ENCODE measurements at regions of chr1 and their contacts with region 1.

Region 1: GRCh38 chr1:229227298-229227919 is 43.5 kb upstream of the RAB4A start:
- DNase-seq: peak; percentile 77 to 87
- H3K4me3 ChIP-seq: no peak overlapping the region
- H3K4me3 Mint-ChIP-seq: peak overlapping the region; percentile 11
- H3K27ac Mint-ChIP-seq: no peak overlapping the region
- H3K4me1 ChIP-seq: peaks cover 65% of the 10 kb centered on the region
- H3K4me1 Mint-ChIP-seq: peaks cover 40% of the 10 kb centered on the region
- H3K27me3 ChIP-seq: no peaks in the 10 kb centered on the region
- H3K27me3 Mint-ChIP-seq: no peaks in the 10 kb centered on the region
- CTCF ChIP-seq: peak; percentile 80 to 91

Region 2: DNA sequence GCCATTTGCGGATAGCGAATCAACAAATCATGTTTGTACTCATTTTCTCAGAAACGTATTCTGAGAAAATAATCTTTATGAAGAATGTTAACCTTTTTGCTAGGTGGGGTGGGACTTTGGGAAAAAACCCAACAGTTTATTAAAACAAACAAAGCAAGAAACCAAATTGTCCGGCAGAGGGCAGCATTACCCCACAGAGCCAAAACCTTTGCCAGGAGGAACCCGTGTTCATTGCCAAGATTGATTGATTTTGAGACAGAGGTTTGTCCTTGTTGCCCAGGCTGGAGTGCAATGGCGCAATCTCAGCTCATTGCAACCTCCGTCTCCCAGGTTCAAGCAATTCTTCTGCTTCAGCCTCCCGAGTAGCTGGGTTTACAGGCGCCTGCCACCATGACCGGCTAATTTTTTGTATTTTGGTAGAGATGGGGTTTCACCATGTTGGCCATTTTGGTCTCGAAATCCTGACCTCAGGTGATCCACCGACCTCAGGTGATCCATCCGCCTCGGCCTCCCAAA is 563.0 kb before region 1 on chr1:
- CTCF ChIA-PET with region 1: no interaction called
- POLR2A ChIA-PET with region 1: interaction called, 3 read pairs
- intact Hi-C with region 1: loop called (anchors 1 kb)
- DNase-seq: peak; percentile 72 to 80
- H3K4me3 ChIP-seq: no peak overlapping the region
- H3K4me3 Mint-ChIP-seq: no peak overlapping the region
- H3K27ac Mint-ChIP-seq: no peak overlapping the region
- H3K4me1 ChIP-seq: peaks cover 8% of the 10 kb centered on the region
- H3K4me1 Mint-ChIP-seq: peaks cover 5% of the 10 kb centered on the region
- H3K27me3 ChIP-seq: no peaks in the 10 kb centered on the region
- H3K27me3 Mint-ChIP-seq: no peaks in the 10 kb centered on the region
- CTCF ChIP-seq: peak; percentile 65 to 90

Region 3: DNA sequence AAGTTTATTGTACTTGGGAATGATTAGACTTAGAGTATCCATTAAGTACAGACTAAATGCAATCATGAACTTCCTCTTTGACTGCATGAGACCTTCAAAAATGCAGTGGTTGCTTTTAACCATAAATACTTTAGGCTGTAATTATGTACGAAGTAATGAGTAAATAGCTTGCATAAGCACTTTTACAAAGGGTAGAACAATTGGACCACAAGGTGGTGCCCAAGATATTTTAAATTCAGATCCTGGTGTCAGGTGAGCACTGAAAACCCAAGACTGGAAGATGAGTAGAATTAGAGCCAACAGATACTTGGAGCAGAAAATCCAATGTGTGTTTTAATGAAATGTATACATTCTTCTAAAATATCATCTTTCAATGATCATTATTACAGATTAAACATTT is 535.5 kb before region 1 on chr1:
- CTCF ChIA-PET with region 1: interaction called, 3 read pairs
- POLR2A ChIA-PET with region 1: no interaction called
- intact Hi-C with region 1: loop called (anchors 1 kb)
- DNase-seq: peak in 1 of 2 experiments; percentile 63
- H3K4me3 ChIP-seq: no peak overlapping the region
- H3K4me3 Mint-ChIP-seq: no peak overlapping the region
- H3K27ac Mint-ChIP-seq: no peak overlapping the region
- H3K4me1 ChIP-seq: no peaks in the 10 kb centered on the region
- H3K4me1 Mint-ChIP-seq: no peaks in the 10 kb centered on the region
- H3K27me3 ChIP-seq: no peaks in the 10 kb centered on the region
- H3K27me3 Mint-ChIP-seq: no peaks in the 10 kb centered on the region
- CTCF ChIP-seq: peak; percentile 37 to 72

Region 4: DNA sequence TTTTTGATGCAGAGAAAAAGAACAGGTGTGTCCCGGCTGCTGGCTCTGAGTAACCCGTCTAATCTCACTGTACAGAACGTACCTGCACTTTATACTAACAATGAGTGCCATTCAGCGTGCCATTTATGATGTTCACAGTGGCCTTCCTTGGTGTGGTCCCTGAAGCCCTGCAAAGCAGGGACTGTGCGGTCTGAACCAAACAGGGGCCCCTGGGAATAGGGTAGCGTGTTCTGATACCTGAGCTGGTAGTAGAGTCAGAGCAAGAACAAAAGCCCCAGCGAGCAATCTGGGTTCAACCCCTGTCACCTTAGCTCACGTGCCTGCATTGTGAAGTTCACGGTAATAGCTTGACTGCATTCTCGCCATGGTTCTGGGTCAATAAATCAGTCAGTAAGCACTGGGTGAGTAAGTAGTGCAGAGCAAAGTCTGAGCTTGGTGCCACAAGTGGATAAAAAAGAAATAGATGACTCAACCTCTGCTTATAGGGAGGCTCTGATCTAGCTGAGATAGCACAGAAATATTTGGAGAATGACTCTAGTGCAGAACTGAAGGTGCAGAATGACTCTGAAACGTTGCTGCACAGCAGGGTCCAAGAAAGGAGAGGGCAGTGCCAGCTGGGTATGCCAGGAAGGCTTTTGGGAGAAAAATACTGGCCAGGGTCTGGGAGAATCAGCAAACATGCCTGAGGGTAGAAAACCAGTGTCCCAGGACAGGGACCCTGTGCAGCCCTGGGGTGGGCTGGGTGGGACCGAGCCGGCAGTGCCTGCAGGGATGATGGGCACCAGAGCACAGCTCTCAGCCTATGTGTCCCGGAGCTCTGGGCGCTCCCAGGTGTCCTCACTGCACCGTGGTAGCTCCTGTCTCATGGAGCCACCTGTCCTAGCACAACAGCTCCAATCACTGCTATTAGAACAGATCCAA is 366.2 kb before region 1 on chr1:
- CTCF ChIA-PET with region 1: no interaction called
- POLR2A ChIA-PET with region 1: no interaction called
- intact Hi-C with region 1: loop called (anchors 10 kb)
- DNase-seq: peak; percentile 82 to 88
- H3K4me3 ChIP-seq: no peak overlapping the region
- H3K4me3 Mint-ChIP-seq: peak overlapping the region; percentile 64
- H3K27ac Mint-ChIP-seq: peak overlapping the region; percentile 88
- H3K4me1 ChIP-seq: peaks cover 60% of the 10 kb centered on the region
- H3K4me1 Mint-ChIP-seq: peaks cover 55% of the 10 kb centered on the region
- H3K27me3 ChIP-seq: no peaks in the 10 kb centered on the region
- H3K27me3 Mint-ChIP-seq: no peaks in the 10 kb centered on the region
- CTCF ChIP-seq: no peak

Region 5: DNA sequence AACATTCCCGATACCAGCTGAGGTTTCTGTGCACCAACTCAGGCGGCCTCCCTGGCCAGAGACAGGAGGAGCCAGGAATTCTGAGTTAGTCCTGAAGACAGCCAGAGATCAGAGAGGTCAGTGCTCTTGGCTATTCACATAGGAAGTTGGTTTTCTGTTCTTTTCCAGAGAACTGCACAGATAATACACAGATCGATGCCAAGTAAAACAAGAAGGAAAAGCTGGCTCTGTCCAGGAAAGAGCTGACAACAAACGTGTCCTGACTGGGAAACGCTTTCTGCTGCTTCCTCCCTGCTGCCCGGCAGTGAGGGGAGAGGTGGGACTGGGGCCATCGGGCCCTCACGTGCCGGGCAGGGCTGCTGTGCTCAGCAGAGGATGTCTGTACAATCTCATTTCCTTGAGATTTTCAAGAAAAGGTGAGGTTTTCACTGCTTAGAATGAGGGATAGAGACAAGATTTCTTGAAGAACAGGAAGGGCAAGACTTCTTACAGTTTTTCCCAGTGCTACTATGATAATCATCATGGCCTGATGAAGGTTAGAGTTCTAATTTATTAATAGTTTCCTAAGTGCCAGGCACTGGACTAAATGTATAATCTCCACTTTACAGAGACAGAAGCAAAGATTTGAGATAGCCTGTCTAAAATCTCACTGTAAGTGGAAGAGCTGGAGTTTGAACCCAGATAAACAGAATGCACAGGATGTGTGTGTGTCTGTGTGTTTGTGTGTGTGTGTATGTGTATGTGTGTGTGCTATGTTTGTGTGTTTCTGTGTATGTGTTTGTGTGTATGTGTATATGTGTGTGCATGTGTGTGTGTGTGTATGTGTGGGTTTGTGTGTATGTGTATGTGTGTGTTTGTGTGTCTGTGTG is 167.5 kb before region 1 on chr1:
- CTCF ChIA-PET with region 1: no interaction called
- POLR2A ChIA-PET with region 1: no interaction called
- intact Hi-C with region 1: loop called (anchors 10 kb)
- DNase-seq: no peak
- H3K4me3 ChIP-seq: no peak overlapping the region
- H3K4me3 Mint-ChIP-seq: no peak overlapping the region
- H3K27ac Mint-ChIP-seq: no peak overlapping the region
- H3K4me1 ChIP-seq: no peaks in the 10 kb centered on the region
- H3K4me1 Mint-ChIP-seq: peaks cover 19% of the 10 kb centered on the region
- H3K27me3 ChIP-seq: no peaks in the 10 kb centered on the region
- H3K27me3 Mint-ChIP-seq: no peaks in the 10 kb centered on the region
- CTCF ChIP-seq: no peak

Region 6: DNA sequence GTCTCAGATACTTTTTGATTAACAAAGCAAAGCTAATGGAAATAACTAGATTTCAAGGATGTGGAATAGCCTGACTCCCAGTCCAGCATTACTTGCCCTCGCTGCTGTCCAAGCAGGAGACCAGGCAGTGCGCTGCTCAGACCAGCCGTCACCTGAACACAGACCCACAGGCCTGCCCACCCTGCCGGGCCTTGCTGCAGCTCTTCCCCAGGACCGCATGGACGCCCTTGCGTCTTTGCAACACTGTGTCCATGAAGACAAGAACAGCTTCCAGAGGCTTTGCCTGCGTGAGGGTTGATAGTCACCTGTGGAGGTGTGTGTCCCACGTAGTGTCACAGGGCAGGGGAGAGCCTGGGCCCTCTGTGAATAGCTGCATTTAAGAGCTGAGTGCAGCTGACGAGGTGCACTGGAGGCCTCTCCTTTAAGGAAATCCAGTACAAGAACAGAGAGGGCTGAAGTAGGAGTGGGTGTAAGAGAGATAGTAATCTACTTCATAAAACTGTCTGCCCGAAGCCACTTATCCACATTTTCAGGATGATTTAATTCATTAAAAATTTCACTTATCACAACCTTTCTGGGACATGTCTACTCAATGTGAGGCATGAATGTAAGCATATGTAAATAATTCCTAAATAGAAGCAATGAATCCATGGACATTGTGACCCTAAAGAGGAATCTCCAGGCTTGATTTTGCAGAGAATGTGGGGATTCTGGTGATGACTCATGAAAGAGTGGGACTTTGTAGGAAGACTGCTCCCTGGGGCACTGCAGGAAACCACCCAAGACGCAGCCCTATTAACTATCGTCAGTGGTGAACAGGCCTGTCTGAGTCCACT is 132.7 kb before region 1 on chr1:
- CTCF ChIA-PET with region 1: interaction called, 3 read pairs
- POLR2A ChIA-PET with region 1: no interaction called
- intact Hi-C with region 1: loop called (anchors 10 kb)
- DNase-seq: no peak
- H3K4me3 ChIP-seq: no peak overlapping the region
- H3K4me3 Mint-ChIP-seq: no peak overlapping the region
- H3K27ac Mint-ChIP-seq: peak overlapping the region; percentile 75
- H3K4me1 ChIP-seq: peaks cover 45% of the 10 kb centered on the region
- H3K4me1 Mint-ChIP-seq: peaks cover 54% of the 10 kb centered on the region
- H3K27me3 ChIP-seq: no peaks in the 10 kb centered on the region
- H3K27me3 Mint-ChIP-seq: no peaks in the 10 kb centered on the region
- CTCF ChIP-seq: no peak

Region 7: GRCh38 chr1:229156872-229157271 is 70.5 kb before region 1 on chr1:
- CTCF ChIA-PET with region 1: interaction called, 4 read pairs
- POLR2A ChIA-PET with region 1: no interaction called
- intact Hi-C with region 1: loop called (anchors 5 kb)
- DNase-seq: peak; percentile 42 to 49
- H3K4me3 ChIP-seq: no peak overlapping the region
- H3K4me3 Mint-ChIP-seq: no peak overlapping the region
- H3K27ac Mint-ChIP-seq: no peak overlapping the region
- H3K4me1 ChIP-seq: no peaks in the 10 kb centered on the region
- H3K4me1 Mint-ChIP-seq: no peaks in the 10 kb centered on the region
- H3K27me3 ChIP-seq: no peaks in the 10 kb centered on the region
- H3K27me3 Mint-ChIP-seq: no peaks in the 10 kb centered on the region
- CTCF ChIP-seq: peak; percentile 67

Region 8: DNA sequence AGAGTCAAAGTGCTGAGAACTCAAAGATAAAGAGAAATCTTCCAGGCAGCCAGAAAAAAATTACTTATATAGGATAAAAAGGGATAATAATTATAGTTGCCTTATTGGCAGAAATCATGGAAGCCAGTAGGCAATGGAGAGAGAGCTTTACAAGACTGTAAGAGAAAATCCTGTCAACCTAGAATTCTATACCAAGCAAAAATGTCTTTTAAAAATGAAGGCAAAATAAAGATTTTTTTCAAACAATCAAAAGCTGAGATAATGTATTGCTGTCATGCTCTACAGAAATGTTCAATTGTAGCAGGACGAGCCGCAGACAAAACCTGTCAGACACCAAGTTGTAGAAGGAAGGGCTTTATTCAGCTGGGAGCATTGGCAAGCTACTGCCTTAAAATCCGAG is 16.7 kb after region 1 on chr1:
- CTCF ChIA-PET with region 1: no interaction called
- POLR2A ChIA-PET with region 1: no interaction called
- intact Hi-C with region 1: no loop called
- DNase-seq: no peak
- H3K4me3 ChIP-seq: no peak overlapping the region
- H3K4me3 Mint-ChIP-seq: no peak overlapping the region
- H3K27ac Mint-ChIP-seq: no peak overlapping the region
- H3K4me1 ChIP-seq: no peaks in the 10 kb centered on the region
- H3K4me1 Mint-ChIP-seq: peaks cover 6% of the 10 kb centered on the region
- H3K27me3 ChIP-seq: no peaks in the 10 kb centered on the region
- H3K27me3 Mint-ChIP-seq: no peaks in the 10 kb centered on the region
- CTCF ChIP-seq: no peak